ENCODE measurements at regions of chr14 and their contacts with region 1.

Region 1: GRCh38 chr14:99982537-99983250 is 82.5 kb upstream of the EVL start:
- ATAC-seq: peak; percentile 69 to 88 (median 81)
- H3K4me3 ChIP-seq: no peak overlapping the region
- H3K27ac ChIP-seq: no peak overlapping the region
- H3K4me1 ChIP-seq: peaks cover 3 to 14% of the 10 kb centered on the region in 2 donors

Region 2: GRCh38 chr14:99744199-99744879 is 238.4 kb before region 1 on chr14:
- in situ Hi-C with region 1: no loop called
- ATAC-seq: peak; percentile 37 to 68 (median 58)
- H3K4me3 ChIP-seq: no peak overlapping the region
- H3K27ac ChIP-seq: no peak overlapping the region
- H3K4me1 ChIP-seq: peaks cover 14 to 28% of the 10 kb centered on the region in 2 donors

Region 3: DNA sequence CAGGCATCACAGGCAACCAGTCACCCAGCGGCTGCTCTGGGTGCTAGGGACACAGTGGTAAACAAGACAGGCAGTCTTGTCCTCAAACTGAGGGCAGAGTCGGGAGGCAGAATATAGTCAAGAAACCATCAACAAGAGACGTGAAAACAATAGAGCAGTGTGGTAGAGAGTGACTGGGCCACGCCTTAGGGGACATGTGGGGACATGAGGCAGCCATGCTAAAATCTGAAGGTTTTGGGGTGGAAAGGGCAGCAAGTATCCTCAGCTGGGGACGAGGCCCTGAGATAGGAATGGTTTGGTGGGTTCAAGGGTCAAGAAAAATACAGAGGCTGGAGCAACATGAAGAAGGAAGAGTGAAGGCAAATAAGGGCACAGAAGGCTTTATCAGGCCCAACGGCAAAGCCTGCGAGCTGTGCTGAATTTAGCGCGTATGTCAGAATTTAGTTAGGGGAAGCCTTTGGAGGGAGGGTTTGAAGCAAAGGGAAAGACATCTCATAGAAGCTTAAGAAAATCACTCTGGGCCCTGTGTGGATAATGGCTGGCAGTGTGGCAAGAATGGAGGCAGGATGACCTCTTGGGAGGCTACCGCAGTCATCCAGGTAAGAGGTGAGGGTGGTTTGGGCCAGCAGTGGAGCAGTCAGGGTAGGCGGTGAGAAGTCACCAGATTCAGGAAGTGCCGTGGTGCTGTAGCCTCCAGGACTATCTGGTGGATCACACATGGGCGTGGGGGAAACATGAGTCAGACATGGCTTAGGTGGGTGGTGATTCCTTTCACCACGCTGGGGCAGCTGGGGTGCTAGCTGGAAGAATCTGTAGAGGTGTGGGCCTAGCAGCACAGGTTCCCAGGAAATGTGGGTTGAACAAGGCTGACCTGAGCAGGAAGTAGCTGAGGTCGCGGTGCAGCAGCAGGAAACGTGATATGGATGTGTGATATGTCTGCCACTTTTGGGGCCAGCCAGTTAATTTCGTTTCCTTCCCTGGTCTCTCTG is 85.6 kb after region 1 on chr14:
- in situ Hi-C with region 1: no loop called
- ATAC-seq: peak in 3 of 8 experiments; percentile 61 to 99 (median 94)
- H3K4me3 ChIP-seq: no peak overlapping the region
- H3K27ac ChIP-seq: no peak overlapping the region
- H3K4me1 ChIP-seq: peaks cover 0 to 8% of the 10 kb centered on the region in 2 donors

Region 4: GRCh38 chr14:100108042-100108825 is 125.5 kb after region 1 on chr14:
- in situ Hi-C with region 1: loop called in 3 of 9 experiments (anchors 10 to 25 kb)
- ATAC-seq: peak; percentile 83 to 97 (median 95)
- H3K4me3 ChIP-seq: no peak overlapping the region
- H3K27ac ChIP-seq: no peak overlapping the region
- H3K4me1 ChIP-seq: peaks cover 0 to 2% of the 10 kb centered on the region in 2 donors

Region 5: DNA sequence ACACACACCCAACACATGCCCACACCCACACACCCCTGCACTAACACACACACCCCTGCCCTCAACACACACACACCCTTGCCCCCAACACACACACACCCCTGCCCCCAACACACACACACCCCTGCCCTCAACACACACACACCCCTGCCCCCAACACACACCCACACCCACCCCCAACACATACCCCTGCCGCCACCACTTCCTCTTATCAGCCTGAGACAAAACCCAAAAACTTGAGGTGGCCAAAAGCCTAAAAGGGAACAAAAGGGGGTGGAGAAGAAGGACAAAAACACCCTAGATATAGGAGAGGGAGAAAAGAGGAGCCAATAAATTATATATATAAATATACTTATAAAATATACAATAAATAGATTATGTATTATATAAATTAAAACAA is 185.8 kb after region 1 on chr14:
- in situ Hi-C with region 1: no loop called
- ATAC-seq: no peak
- H3K4me3 ChIP-seq: no peak overlapping the region
- H3K27ac ChIP-seq: no peak overlapping the region
- H3K4me1 ChIP-seq: peaks cover 4 to 7% of the 10 kb centered on the region in 2 donors

Region 6: DNA sequence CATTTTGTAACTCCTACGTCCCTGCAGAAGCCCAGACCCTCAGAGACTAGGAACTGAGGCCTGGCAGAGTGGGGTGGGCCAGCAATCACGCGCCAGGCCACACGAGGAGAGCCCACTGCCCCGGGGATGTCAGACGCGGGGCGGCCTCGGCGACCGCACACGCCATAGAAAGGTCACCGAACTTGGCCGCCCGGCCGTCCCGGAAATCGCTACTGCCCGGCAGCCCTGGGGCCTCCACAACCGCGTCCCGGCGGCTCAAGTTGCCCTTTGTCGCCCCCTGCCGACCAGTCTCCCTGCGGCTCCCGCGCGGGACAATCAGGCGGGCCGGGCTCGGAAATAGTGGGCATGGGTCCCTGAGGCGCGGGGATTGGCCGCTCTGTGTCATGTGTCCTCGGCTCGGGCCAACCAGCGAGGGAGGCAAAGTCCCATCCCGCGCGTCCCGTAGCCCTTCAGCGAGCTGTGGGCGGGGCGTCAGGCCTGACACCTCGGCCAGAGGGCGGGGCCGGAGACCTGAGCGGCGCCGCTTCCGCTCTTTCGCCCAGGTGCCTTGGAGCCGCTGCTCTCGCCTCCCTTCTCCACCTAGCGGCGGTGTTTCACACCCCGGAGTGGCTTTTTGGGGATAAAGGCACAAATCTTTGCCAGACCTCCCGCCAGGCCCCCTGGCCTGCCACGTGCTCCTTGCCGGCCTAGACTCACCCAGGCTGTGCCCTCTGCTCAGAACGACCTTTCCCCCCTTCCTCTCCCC is 210.2 kb after region 1 on chr14:
- in situ Hi-C with region 1: loop called in 1 of 9 experiments (anchors 25 kb)
- ATAC-seq: peak; percentile 99 to 100 (median 99)
- H3K4me3 ChIP-seq: peak overlapping the region; percentile 29 to 41 (median 34)
- H3K27ac ChIP-seq: peak overlapping the region; percentile 52 to 80
- H3K4me1 ChIP-seq: peaks cover 8 to 12% of the 10 kb centered on the region in 2 donors

Region 7: GRCh38 chr14:100256339-100256895 is 273.7 kb after region 1 on chr14:
- in situ Hi-C with region 1: no loop called
- ATAC-seq: no peak
- H3K4me3 ChIP-seq: no peak overlapping the region
- H3K27ac ChIP-seq: no peak overlapping the region
- H3K4me1 ChIP-seq: no peaks in the 10 kb centered on the region